Right cardiac atrium (tissue), 5 donors: ENCODE measurements at regions of chr9 and their contacts with region 1.

Region 1: DNA sequence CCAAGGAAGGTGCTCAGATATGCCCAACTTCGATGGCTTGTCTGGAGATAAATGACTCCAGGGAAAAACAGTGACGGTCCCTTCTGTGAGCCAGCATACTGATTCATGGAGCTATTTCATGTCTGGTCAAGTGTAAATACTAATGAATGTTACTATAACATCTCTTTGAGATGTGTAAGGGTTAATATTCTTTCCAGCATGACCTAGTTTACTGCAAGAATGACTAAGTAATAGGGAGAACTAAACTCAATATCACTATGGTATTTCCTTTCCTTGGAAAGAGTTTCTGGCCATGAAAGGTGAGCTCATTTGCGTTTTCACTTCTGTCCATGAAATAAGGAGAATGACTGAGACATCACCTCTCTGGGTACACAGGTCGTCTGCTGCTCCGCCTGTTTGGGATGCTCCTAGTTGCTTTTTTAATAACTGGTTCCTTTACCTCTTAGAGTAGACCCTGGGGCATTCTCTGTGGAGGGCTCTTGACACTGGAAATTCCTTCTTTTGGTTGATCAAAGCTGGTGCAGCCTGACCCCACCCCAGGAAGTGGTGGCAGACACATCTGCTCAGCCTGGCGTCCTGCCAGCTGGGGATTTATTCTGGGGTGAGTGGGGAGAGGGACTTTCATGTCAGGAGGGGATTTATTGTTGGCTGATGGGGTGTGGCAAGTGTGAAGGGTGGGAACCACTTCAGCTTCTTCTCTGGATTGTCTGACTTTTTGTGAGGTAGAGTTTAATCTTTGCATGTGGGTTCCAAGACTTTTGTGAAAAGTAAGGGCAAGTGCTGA is 250.0 kb upstream of the MPDZ start:
- DNase-seq: peak; percentile 18 to 56 (median 33)
- ATAC-seq: no peak
- H3K4me3 ChIP-seq: no peak overlapping the region
- H3K27ac ChIP-seq: no peak overlapping the region
- H3K4me1 ChIP-seq: peaks cover 1% of the 10 kb centered on the region
- H3K27me3 ChIP-seq: no peaks in the 10 kb centered on the region

Region 2: DNA sequence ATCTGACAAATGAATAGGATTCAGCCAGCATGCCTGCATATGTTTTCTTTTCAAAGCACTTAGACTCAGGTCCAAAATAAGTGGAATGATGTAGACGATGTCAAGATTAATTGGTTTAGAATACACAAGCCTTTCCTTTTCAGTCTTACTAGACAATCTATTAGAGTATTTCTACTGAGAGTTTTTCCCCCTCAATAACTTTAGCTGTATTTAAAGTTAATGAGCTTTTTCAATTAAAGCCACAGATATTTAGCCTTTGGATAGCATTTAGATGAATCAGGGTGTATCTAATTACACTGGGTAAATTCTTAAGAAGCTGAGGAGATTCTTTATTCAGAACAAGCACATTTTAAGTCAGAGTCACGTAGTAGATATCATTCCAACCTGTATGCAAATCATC is 51.4 kb before region 1 on chr9:
- intact Hi-C with region 1: loop called in 1 of 4 experiments (anchors 10 kb)
- DNase-seq: no peak
- ATAC-seq: no peak
- H3K4me3 ChIP-seq: no peak overlapping the region
- H3K27ac ChIP-seq: no peak overlapping the region
- H3K4me1 ChIP-seq: peaks cover 2% of the 10 kb centered on the region
- H3K27me3 ChIP-seq: no peaks in the 10 kb centered on the region

Region 3: GRCh38 chr9:13588151-13589033 is 58.9 kb after region 1 on chr9:
- intact Hi-C with region 1: loop called in 1 of 4 experiments (anchors 10 kb)
- DNase-seq: no peak
- ATAC-seq: peak; percentile 67 to 81
- H3K4me3 ChIP-seq: no peak overlapping the region
- H3K27ac ChIP-seq: no peak overlapping the region
- H3K4me1 ChIP-seq: peaks cover 3% of the 10 kb centered on the region
- H3K27me3 ChIP-seq: no peaks in the 10 kb centered on the region